Activated CD4-positive, alpha-beta T cell treated with anti-CD3 and anti-CD28 coated beads for 36 hours (primary cell): ENCODE measurements at regions of chr6 and their contacts with region 1.

Region 1: GRCh38 chr6:31827286-31828079 is at the start of gene HSPA1B:
- DNase-seq: peak; percentile 97
- ATAC-seq: peak; percentile 83
- H3K4me3 Mint-ChIP-seq: peak within 1 kb of the TSS; percentile 77
- H3K27ac Mint-ChIP-seq: peak within 1 kb of the TSS; percentile 92
- H3K4me1 Mint-ChIP-seq: peaks cover 43% of the 10 kb centered on the region
- H3K27me3 Mint-ChIP-seq: no peaks in the 10 kb centered on the region
- total RNA-seq, gene HSPA1B: 54.6 to 61.1 TPM

Region 2: DNA sequence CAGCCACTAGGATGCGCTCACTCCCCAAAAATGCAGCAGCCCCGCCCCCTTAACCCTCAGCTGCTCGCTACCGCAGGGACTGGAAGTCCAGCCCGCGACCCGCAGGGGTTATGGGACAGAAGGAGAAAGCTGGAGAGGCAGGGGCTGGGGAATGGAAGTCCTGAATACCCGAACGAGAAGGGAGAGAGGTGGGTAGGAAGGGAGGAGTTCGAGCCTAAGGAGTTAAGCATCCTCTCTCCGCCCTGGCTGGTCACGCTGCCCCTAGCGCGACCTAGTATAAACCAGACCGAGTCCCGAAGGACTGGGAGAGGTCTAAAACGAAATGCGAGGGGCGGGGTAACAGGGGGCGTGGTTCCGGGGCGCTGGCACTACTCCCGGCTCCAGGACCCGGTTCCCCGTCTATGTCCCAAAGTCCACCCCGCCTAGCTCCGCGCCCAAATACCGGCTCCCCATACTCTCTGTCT is 97.9 kb before region 1 on chr6:
- CTCF ChIA-PET with region 1: interaction called, 10 read pairs
- POLR2A ChIA-PET with region 1: interaction called, 3 read pairs
- intact Hi-C with region 1: loop called (anchors 1 kb)
- DNase-seq: peak; percentile 86
- ATAC-seq: peak; percentile 59
- H3K4me3 Mint-ChIP-seq: peak overlapping the region; percentile 69
- H3K27ac Mint-ChIP-seq: peak overlapping the region; percentile 5
- H3K4me1 Mint-ChIP-seq: peaks cover 65% of the 10 kb centered on the region
- H3K27me3 Mint-ChIP-seq: no peaks in the 10 kb centered on the region

Region 3: GRCh38 chr6:31806465-31807272 is 20.8 kb before region 1 on chr6 and contains the start of gene LSM2:
- CTCF ChIA-PET with region 1: interaction called, 23 read pairs
- POLR2A ChIA-PET with region 1: interaction called, 20 read pairs
- intact Hi-C with region 1: loop called in 1 of 2 experiments (anchors 1 kb)
- DNase-seq: peak; percentile 99
- ATAC-seq: peak; percentile 99
- H3K4me3 Mint-ChIP-seq: peak within 1 kb of the TSS; percentile 91
- H3K27ac Mint-ChIP-seq: peak within 1 kb of the TSS; percentile 94
- H3K4me1 Mint-ChIP-seq: peaks cover 22% of the 10 kb centered on the region
- H3K27me3 Mint-ChIP-seq: no peaks in the 10 kb centered on the region
- total RNA-seq, gene LSM2: 112 to 124 TPM

Region 4: GRCh38 chr6:31814677-31815024 is 12.8 kb before region 1 on chr6:
- CTCF ChIA-PET with region 1: interaction called, 12 read pairs
- POLR2A ChIA-PET with region 1: interaction called, 9 read pairs
- intact Hi-C with region 1: loop called in 1 of 2 experiments (anchors 2 kb)
- DNase-seq: peak; percentile 83
- ATAC-seq: peak; percentile 40
- H3K4me3 Mint-ChIP-seq: peak overlapping the region; percentile 72
- H3K27ac Mint-ChIP-seq: peak overlapping the region; percentile 79
- H3K4me1 Mint-ChIP-seq: peaks cover 50% of the 10 kb centered on the region
- H3K27me3 Mint-ChIP-seq: no peaks in the 10 kb centered on the region